Cardiac septum (tissue), 1 donor: ENCODE measurements at regions of chr3 and their contacts with region 1.

Region 1: DNA sequence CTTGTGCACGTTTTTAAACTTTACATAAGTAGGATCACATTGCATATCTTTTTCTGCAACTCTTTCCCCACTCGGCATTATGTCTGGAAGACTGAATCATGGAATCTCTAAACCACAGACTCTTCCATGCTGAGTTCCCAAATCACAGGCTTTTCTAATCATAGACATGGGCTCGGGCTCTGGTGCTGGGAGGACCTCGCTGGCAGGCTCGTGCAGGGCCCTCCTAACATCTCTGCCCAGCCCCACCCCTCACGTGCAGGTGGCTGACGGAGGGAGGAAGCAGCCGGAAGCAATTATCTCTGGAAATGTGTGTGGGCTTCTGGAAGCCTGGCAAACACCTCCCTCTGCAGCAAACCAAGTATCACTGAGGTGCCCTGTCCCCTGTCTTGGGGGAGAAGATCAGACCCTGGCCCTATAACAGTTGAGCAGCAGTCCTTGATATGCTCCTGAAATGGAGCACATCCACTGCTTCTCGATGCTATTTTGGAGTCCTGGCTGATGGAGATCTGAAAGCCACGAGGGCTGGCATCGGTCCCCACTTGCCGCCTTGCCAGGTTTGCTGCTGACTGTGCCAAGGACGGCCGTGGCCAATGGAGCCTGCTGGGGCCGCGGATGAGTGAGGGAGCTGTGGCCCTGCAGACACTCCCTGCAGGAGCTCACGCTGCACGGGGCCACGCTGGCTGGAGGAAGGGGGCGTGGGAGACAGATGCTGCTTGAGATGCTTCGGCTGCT is 4.4 kb upstream of the IQSEC1 start:
- DNase-seq: no peak

Region 2: GRCh38 chr3:12994607-12995388 is 82.8 kb before region 1 on chr3:
- intact Hi-C with region 1: loop called (anchors 5 kb)
- DNase-seq: peak; percentile 95

Region 3: DNA sequence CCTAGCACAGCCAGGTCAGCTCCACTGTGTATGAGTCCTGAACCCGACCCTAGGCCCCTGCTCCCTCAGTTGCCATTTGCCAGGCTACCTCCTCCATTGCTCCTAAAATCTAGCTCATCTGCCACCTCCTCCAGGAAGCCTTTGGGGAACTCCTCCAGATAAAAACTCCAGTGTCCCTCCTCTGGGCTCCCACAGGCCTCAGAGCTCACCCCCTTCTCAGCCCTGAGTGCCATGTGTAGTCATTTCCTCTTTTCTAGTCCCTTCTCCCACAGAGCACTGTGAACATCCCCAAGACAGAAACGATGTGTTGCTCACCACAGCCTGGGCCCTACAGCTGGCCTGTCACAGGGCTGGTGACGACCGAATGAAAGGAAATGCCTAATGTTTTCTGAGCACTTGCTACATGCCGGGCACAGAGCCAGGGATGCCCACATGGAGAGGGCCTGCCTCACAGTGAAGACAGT is 65.3 kb before region 1 on chr3:
- intact Hi-C with region 1: no loop called
- DNase-seq: peak; percentile 90